Cardiac septum (tissue), 1 donor: ENCODE measurements at regions of chr7 and their contacts with region 1.

Region 1: DNA sequence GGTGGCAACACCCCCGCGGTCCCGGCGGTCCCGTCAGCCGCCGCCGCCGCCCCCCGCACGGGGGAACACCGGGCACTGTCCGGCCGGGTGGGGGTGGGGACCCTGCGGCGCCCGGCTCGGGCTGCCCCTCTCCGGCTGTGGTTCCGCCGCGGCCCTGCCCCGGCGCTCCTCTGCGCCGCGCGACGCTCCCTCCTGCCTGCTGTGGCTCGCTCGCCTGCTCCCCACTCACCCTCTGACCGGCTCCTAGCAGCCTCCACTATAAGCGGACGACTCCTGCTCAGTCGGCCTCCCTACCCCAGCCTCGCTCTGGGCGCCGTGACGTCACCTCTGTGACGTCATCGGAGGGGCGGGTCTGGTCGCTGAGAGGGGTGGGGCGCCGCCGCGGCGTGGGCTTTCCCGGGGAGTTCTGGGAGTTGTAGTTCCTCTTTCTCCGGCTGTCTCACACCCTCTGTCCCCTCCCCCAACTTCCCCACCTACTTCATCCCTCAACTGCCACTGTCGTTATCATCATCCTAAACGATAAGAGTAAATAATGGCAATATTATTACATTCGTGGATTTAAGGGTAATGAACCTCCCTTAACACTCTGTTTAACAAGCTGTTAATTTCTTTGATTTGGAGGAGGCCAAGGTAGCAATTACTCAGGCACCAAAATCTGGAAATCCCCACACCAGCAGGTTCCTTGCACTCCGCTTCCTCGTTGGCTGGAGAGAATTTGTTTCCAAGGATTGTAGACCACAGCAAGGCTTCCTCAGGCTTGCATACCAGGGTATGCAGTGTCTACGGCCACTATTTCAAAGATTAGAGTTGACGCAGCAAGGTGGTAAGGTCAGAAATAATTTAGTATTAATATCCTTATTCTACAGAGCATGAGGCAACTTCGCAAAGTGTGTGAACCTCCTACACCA is at the start of gene UBE2H:
- DNase-seq: peak; percentile 97
- total RNA-seq, gene UBE2H: 228 TPM

Region 2: DNA sequence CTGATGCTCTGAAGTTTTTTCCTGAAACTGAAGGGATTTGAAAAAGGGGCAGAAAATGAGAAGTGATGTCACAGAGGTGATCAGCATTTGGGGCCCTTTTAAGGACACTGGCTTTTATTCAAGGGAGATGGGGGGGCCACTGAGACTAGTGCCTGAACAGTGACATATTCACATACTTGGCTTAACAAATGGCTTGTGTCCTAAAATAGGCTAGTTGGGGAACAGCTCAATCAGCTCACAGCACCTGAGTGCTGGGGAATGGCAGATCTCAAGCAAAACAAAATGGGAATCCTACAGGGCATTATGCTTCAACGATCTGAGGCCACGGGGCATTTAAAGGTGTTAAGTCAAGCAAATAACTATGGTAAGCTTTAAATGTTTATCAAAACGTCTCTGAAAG is 90.2 kb before region 1 on chr7:
- intact Hi-C with region 1: loop called (anchors 2 kb)
- DNase-seq: no peak

Region 3: GRCh38 chr7:129882531-129882930 is 70.4 kb before region 1 on chr7:
- intact Hi-C with region 1: no loop called
- DNase-seq: no peak

Region 4: DNA sequence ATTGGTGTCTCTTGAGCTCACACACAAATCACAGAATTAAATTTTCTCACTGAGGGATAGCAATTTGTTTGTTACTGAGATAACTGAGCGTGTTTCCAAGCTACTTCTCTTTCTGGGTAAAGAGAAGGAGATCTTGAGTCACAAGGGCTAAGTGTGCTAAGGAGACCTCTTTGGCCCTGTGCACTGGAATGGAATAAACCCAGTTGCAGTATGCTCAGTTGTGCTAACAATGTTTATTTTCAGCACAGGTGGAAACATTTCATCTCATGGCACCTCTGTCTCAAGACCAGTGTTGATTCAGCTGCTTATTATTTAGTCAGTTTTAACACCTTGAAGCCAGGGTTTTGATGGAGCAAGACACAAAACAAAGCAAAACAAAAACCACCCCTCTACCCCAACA is 22.4 kb after region 1 on chr7:
- intact Hi-C with region 1: no loop called
- DNase-seq: no peak

Region 5: DNA sequence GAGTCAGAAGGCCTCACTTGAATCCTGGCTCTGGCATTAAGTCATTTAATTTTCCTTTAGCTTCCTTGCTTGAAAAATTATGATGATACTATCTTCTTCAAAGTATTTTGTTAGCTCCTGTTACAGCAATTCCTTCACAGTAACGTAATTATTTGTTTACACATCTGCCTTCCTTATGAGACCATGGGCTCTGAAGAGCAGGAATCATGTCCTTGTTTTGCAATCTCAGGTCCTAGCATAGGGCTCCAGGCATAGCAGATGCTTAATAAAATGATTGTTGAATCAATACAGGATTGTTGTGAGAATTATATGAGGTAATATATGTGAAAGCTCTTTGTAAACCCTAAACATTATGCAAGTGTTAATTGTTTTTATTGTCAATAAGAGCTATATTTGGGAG is 142.9 kb after region 1 on chr7:
- intact Hi-C with region 1: no loop called
- DNase-seq: no peak